K562 (cell line): ENCODE measurements at regions of chr14 and their contacts with region 1.

Region 1: GRCh38 chr14:68248481-68249255 is 429.1 kb downstream of the RAD51B start:
- DNase-seq: peak in 2 of 4 experiments; percentile 31 to 38
- ATAC-seq: peak; percentile 56
- H3K4me3 ChIP-seq: no peak overlapping the region
- H3K27ac ChIP-seq: no peak overlapping the region
- H3K4me1 ChIP-seq: peaks cover 0 to 41% of the 10 kb centered on the region in 2 experiments; a peak in 2 of 5 replicates
- H3K27me3 ChIP-seq: no peaks in the 10 kb centered on the region
- CTCF ChIP-seq: peak; percentile 29 to 65 (median 44); a peak in 4 of 6 replicates
- EP300 ChIP-seq: no peak
- POLR2A ChIP-seq: no peak
- RAD21 ChIP-seq: peak; percentile 81 to 82

Region 2: DNA sequence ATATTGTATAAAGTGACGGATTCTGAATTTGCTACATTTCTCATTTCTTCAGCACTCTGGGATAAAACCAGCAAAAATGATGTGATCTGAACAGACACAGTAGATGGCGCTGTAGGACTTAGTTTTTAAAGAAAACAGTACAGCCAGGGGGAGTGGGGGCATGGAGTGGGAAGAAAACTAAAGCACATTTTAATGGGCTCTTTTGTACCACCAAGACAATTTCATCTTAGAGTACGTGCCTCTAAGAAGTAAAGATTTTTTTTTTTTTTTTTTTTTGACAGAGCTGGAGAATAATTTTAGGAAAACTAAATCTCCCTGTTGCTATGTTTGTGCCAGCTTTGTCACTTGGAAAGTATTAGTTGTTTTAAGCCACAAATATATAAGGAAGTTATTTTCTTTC is 304.7 kb before region 1 on chr14:
- CTCF ChIA-PET with region 1: interaction called, 8 read pairs
- POLR2A ChIA-PET with region 1: no interaction called
- in situ Hi-C with region 1: loop called (anchors 10 kb)
- intact Hi-C with region 1: loop called (anchors 5 kb)
- DNase-seq: peak; percentile 15 to 79 (median 30)
- ATAC-seq: peak; percentile 80
- H3K4me3 ChIP-seq: no peak overlapping the region
- H3K27ac ChIP-seq: no peak overlapping the region
- H3K4me1 ChIP-seq: no peaks in the 10 kb centered on the region
- H3K27me3 ChIP-seq: no peaks in the 10 kb centered on the region
- CTCF ChIP-seq: peak; percentile 60 to 75 (median 72)
- EP300 ChIP-seq: no peak
- POLR2A ChIP-seq: no peak
- RAD21 ChIP-seq: peak; percentile 67 to 78

Region 3: DNA sequence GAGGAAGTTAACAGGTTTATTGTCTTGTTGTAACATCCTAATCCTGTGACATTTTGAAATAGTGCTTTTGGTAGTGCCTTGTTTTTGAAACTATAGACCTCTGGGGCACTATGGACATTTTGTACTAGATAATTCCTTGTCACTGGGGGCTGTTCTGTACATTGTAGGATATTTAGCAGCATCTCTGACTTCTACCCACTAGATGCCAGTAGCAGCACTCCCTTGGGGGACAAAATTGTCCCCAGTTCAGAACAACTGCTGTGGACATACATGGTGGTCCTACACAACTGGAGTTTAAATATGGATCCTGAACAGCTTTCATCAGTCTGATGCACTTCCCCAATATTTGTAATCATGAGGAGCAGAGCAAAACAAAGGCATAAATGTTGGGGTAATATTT is 164.4 kb before region 1 on chr14:
- CTCF ChIA-PET with region 1: no interaction called
- POLR2A ChIA-PET with region 1: no interaction called
- in situ Hi-C with region 1: no loop called
- intact Hi-C with region 1: loop called (anchors 10 kb)
- DNase-seq: peak in 1 of 4 experiments; percentile 8
- ATAC-seq: no peak
- H3K4me3 ChIP-seq: no peak overlapping the region
- H3K27ac ChIP-seq: no peak overlapping the region
- H3K4me1 ChIP-seq: peaks cover 4 to 5% of the 10 kb centered on the region in 2 experiments; a peak in 3 of 5 replicates
- H3K27me3 ChIP-seq: no peaks in the 10 kb centered on the region; a peak in 1 of 5 replicates
- CTCF ChIP-seq: peak in 2 of 3 experiments; percentile 9 to 30; a peak in 1 of 6 replicates
- EP300 ChIP-seq: no peak
- POLR2A ChIP-seq: no peak
- RAD21 ChIP-seq: peak; percentile 36 to 46; a peak in 3 of 4 replicates

Region 4: DNA sequence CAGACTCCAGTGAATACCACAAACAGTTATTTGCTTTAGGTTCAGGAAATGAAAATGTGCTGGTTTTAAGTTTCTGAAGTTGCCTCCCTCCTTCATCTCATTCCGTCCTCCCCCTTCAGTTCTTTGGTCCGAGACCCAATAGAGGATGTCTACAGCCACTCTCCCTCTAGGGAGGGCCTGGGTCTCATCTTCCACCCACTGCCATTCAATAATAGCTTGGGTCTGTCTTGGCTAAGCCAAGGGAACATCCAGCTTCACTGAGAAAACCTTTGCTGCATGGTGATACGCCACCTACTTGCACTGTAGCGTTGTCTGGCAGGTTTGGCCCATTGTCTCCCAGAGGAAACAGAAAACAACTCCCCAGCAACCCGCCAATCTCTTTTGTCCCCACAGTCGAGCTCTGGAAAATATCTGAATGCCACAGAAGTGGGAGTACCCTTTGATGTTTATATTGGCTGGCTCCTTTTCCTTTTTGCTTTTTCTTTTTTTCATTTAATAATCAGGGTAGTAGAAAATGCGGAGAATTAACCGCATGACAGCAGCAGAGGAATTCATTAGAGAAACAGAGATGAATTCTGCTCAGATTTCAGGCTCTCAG is 49.0 kb before region 1 on chr14:
- CTCF ChIA-PET with region 1: no interaction called
- POLR2A ChIA-PET with region 1: no interaction called
- in situ Hi-C with region 1: no loop called
- intact Hi-C with region 1: no loop called
- DNase-seq: no peak
- ATAC-seq: no peak; the same call in 2 of the 3 replicates
- H3K4me3 ChIP-seq: no peak overlapping the region
- H3K27ac ChIP-seq: no peak overlapping the region
- H3K4me1 ChIP-seq: no peaks in the 10 kb centered on the region
- H3K27me3 ChIP-seq: no peaks in the 10 kb centered on the region
- CTCF ChIP-seq: no peak
- EP300 ChIP-seq: no peak
- POLR2A ChIP-seq: no peak
- RAD21 ChIP-seq: no peak

Region 5: DNA sequence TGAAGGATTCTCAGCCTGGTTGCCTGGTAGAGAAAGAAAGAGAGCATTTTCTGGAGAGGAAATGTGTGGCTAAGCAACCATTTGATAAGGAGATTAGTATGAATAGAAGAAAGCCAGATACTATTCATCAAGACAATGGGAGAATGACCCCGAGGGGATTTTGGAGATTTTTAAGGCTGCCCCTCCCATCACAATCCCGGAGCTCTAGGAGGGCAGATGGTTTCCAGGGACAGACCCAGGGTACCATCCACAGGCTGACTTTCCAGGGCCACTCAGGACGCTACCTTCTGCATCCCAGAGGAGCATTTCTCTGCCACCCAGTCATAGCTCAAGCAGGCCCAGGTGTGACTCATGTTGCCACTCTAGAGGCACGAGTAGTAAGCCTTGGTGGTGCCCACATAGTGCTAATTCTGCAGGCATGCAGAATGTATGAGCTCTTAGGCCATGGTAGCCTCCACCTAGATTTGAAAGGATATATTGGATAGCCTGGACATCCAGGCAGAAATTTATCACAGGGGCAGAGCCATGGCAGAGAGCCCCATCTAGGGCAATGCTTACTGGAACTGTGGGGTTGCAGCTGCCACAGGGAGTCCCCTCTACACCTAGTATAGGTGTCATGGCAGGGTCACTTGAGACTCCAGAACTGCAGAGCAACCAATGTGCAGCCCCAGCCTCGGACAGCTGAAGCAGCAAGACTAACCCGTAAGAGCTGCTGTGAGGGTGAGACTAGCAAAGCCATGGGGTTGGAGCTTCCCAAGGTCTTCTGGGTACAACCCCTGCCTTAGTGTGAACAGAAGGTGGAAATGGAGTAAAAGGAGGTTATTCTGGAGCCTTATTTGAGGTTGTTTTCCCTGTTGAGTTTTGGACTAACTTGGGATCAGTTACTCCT is 178.2 kb after region 1 on chr14:
- CTCF ChIA-PET with region 1: no interaction called
- POLR2A ChIA-PET with region 1: no interaction called
- in situ Hi-C with region 1: no loop called
- intact Hi-C with region 1: loop called (anchors 5 kb)
- DNase-seq: no peak
- ATAC-seq: no peak
- H3K4me3 ChIP-seq: no peak overlapping the region
- H3K27ac ChIP-seq: no peak overlapping the region
- H3K4me1 ChIP-seq: no peaks in the 10 kb centered on the region
- H3K27me3 ChIP-seq: no peaks in the 10 kb centered on the region
- CTCF ChIP-seq: no peak
- EP300 ChIP-seq: no peak
- POLR2A ChIP-seq: no peak
- RAD21 ChIP-seq: no peak

Region 6: DNA sequence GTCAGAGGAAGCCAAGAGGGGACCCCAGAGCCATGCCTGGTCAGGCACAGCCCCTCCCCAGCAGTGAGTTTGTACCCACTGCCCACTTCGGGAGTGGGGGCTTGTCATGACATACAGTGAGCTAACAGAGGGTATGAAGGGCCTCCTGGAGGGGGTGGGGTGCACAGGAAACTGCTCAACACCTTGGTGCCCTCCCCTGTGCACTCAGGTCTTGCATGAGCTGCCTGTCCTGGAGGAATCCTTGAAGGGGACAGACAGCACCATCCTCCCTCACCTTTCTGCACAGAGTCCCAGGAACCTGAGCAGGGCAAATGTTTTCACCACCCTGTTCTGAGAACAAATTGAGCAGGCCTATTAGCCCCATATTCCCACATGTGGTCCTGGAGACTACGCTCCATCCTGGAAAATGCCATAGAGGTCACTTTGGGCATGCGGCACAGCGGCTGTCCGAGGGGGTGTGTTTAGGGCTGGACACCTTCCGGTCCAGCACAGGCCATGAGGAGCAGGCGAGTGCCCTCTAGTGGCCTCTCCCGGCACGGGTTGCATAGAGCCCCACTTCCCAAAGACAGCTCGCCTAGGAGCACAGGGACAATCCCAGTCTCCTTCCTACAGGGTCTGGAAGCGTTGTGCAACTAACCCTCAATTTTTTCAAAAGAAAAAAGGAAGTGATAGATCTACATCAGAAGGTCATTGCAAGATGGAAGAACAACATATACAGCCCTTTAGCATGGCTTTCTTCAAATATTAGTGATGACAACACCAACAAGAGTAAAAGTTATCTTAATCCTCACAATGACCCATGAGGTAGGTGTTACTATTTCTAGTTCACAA is 576.1 kb after region 1 on chr14:
- CTCF ChIA-PET with region 1: no interaction called
- POLR2A ChIA-PET with region 1: no interaction called
- in situ Hi-C with region 1: loop called (anchors 10 kb)
- intact Hi-C with region 1: no loop called
- DNase-seq: peak; percentile 80 to 87 (median 82)
- ATAC-seq: peak; percentile 98
- H3K4me3 ChIP-seq: no peak overlapping the region
- H3K27ac ChIP-seq: no peak overlapping the region
- H3K4me1 ChIP-seq: peaks cover 7 to 13% of the 10 kb centered on the region in 2 experiments; a peak in 4 of 5 replicates
- H3K27me3 ChIP-seq: no peaks in the 10 kb centered on the region
- CTCF ChIP-seq: peak; percentile 81 to 94 (median 84)
- EP300 ChIP-seq: peak; percentile 25; the same call in 1 of the 2 replicates
- POLR2A ChIP-seq: no peak
- RAD21 ChIP-seq: peak; percentile 58 to 81